ENCODE measurements at regions of chr21 and their contacts with region 1.

Region 1: DNA sequence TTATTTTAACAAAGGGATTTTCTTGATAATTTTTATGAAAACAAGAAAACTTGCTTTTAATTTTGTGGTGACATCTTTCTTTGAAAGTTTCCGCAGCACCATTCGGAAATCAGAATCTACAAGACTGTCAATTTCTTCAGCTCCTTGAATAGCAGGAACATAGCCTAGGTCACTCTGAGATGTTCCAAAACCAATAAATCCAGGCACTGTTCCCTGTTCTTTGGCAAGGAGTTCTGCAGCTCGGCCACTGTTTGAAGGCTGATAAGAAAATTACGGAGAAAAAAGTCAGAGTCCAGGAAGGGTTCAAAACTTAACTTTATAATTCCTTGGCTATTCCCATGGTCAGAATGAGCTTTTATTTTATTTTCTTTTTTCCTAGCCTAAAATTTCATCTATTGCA is 6.0 kb downstream of the LTN1 start:
- DNase-seq: no peak
- ATAC-seq: no peak
- H3K4me3 ChIP-seq: no peak overlapping the region
- H3K27ac ChIP-seq: no peak overlapping the region
- H3K4me1 ChIP-seq: peaks cover 6% of the 10 kb centered on the region
- H3K27me3 ChIP-seq: no peaks in the 10 kb centered on the region
- CTCF ChIP-seq: no peak

Region 2: DNA sequence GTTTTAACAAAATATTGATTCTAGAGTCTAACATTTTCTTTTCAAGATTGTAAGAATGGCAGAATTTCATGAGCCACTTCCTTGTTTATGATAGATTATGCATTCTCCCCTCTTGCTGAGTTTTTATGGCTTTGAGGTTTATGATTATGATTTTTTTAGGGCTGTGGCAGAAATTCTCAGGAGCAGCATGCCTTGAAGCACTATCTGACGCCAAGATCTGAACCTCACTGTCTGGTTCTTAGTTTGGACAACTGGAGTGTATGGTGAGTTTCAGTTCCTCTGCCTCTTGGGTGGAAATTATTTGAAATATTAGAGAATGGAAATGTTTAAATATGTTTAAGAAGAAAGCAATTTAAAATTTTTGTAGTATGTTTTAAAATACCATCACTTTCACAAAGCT is 48.0 kb after region 1 on chr21:
- intact Hi-C with region 1: loop called (anchors 10 kb)
- DNase-seq: no peak
- ATAC-seq: no peak
- H3K4me3 ChIP-seq: no peak overlapping the region
- H3K27ac ChIP-seq: no peak overlapping the region
- H3K4me1 ChIP-seq: no peaks in the 10 kb centered on the region
- H3K27me3 ChIP-seq: no peaks in the 10 kb centered on the region
- CTCF ChIP-seq: no peak